Endothelial cell of umbilical vein (primary cell): ENCODE measurements at regions of chr7 and their contacts with region 1.

Region 1: GRCh38 chr7:93015779-93016481 is 101.8 kb downstream of the SAMD9 start:
- DNase-seq: peak; percentile 57
- H3K4me3 ChIP-seq: no peak overlapping the region
- H3K27ac ChIP-seq: peak overlapping the region; percentile 89
- H3K4me1 ChIP-seq: peaks cover 54% of the 10 kb centered on the region
- H3K27me3 ChIP-seq: no peaks in the 10 kb centered on the region
- CTCF ChIP-seq: no peak
- POLR2A ChIP-seq: no peak

Region 2: DNA sequence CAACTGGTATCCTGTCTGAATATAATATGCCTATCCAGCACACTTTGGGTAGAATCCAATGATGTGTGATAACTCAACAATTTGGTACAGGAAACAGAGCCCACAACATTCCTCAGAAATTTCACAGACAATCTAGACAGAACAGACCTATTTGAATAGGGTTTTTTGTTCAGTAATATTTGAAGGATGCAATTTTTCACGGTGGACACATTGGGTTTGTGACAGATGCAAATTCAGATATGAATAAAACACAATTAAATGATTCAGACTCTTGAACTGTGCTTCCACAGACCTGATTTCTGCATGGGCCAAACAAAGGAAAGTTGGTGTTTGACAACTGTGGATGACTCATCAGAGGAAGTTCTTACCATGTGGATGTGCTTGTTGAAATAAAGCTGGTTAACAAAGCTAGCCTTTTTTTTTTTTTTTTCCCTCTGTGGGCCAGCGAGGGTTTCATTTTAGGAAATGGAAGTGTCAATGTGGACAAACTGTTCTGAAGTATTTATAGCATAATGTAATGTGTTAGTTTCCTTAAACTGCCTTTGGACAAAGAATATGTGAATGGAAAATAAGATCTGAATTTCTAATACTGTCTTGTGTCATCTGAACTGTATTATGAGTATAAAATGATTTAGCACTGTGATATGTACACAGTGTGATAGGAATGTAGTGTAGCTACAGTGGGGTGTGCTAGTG is 382.6 kb before region 1 on chr7:
- CTCF ChIA-PET with region 1: interaction called, 3 read pairs
- POLR2A ChIA-PET with region 1: no interaction called
- dilution Hi-C with region 1: no loop called
- intact Hi-C with region 1: loop called (anchors 1 kb)
- DNase-seq: peak; percentile 98
- H3K4me3 ChIP-seq: peak overlapping the region in 1 of 3 experiments; percentile 31
- H3K27ac ChIP-seq: peak overlapping the region; percentile 99
- H3K4me1 ChIP-seq: peaks cover 57% of the 10 kb centered on the region
- H3K27me3 ChIP-seq: no peaks in the 10 kb centered on the region
- CTCF ChIP-seq: no peak
- POLR2A ChIP-seq: peak; percentile 27

Region 3: GRCh38 chr7:92809397-92810241 is 206.3 kb before region 1 on chr7:
- CTCF ChIA-PET with region 1: no interaction called
- POLR2A ChIA-PET with region 1: no interaction called
- dilution Hi-C with region 1: no loop called
- intact Hi-C with region 1: loop called (anchors 1 kb)
- DNase-seq: peak; percentile 90
- H3K4me3 ChIP-seq: peak overlapping the region in 1 of 3 experiments; percentile 32
- H3K27ac ChIP-seq: peak overlapping the region; percentile 86
- H3K4me1 ChIP-seq: peaks cover 29% of the 10 kb centered on the region
- H3K27me3 ChIP-seq: no peaks in the 10 kb centered on the region
- CTCF ChIP-seq: no peak
- POLR2A ChIP-seq: no peak

Region 4: GRCh38 chr7:92964141-92964540 is 51.8 kb before region 1 on chr7:
- CTCF ChIA-PET with region 1: no interaction called
- POLR2A ChIA-PET with region 1: no interaction called
- dilution Hi-C with region 1: no loop called
- intact Hi-C with region 1: no loop called
- DNase-seq: no peak
- H3K4me3 ChIP-seq: no peak overlapping the region
- H3K27ac ChIP-seq: no peak overlapping the region
- H3K4me1 ChIP-seq: no peaks in the 10 kb centered on the region
- H3K27me3 ChIP-seq: peaks cover 0 to 2% of the 10 kb centered on the region in 2 experiments
- CTCF ChIP-seq: no peak
- POLR2A ChIP-seq: no peak

Region 5: GRCh38 chr7:92997152-92997551 is 18.8 kb before region 1 on chr7:
- CTCF ChIA-PET with region 1: interaction called, 10 read pairs
- POLR2A ChIA-PET with region 1: no interaction called
- dilution Hi-C with region 1: no loop called
- intact Hi-C with region 1: no loop called
- DNase-seq: no peak
- H3K4me3 ChIP-seq: no peak overlapping the region
- H3K27ac ChIP-seq: no peak overlapping the region
- H3K4me1 ChIP-seq: no peaks in the 10 kb centered on the region
- H3K27me3 ChIP-seq: peaks cover 0 to 2% of the 10 kb centered on the region in 2 experiments
- CTCF ChIP-seq: no peak
- POLR2A ChIP-seq: no peak

Region 6: GRCh38 chr7:93147363-93147762 is 131.4 kb after region 1 on chr7:
- CTCF ChIA-PET with region 1: no interaction called
- POLR2A ChIA-PET with region 1: no interaction called
- dilution Hi-C with region 1: no loop called
- intact Hi-C with region 1: loop called (anchors 5 kb)
- DNase-seq: peak; percentile 76
- H3K4me3 ChIP-seq: peak overlapping the region; percentile 30 to 89 (median 71)
- H3K27ac ChIP-seq: peak overlapping the region; percentile 50
- H3K4me1 ChIP-seq: peaks cover 20% of the 10 kb centered on the region
- H3K27me3 ChIP-seq: no peaks in the 10 kb centered on the region
- CTCF ChIP-seq: no peak
- POLR2A ChIP-seq: no peak